GM10248 (cell line): ENCODE measurements at regions of chr14 and their contacts with region 1.

Region 1: DNA sequence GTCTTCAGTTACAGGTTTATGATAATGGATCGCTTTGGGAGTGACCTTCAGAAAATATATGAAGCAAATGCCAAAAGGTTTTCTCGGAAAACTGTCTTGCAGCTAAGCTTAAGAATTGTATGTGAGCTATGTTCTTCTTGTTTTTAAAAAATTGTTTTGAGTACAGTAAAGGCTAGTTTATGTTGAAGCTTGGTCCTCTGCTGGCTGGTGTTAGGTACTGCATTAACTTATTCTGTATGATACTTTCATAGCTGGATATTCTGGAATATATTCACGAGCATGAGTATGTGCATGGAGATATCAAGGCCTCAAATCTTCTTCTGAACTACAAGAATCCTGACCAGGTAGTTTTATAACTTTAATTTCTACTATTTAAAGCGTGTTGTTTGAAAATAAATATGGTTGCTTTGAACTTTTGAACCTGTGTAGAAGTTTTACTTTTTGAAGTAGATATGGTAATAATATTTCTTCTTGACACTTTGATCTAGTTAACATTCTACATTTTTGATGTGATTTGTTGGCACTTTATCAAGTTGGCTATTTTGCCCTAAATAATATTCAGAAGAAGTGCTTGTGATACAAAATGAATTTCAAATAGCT is 55.7 kb downstream of the VRK1 start:
- DNase-seq: peak; percentile 12
- CTCF ChIP-seq: peak; percentile 59

Region 2: GRCh38 chr14:96796851-96797581 is 55.9 kb before region 1 on chr14 and contains the start of gene VRK1:
- CTCF ChIA-PET with region 1: interaction called, 15 read pairs
- POLR2A ChIA-PET with region 1: no interaction called
- DNase-seq: peak; percentile 95
- CTCF ChIP-seq: no peak

Region 3: GRCh38 chr14:96802963-96803362 is 50.0 kb before region 1 on chr14:
- CTCF ChIA-PET with region 1: interaction called, 15 read pairs
- POLR2A ChIA-PET with region 1: no interaction called
- DNase-seq: no peak
- CTCF ChIP-seq: no peak

Region 4: GRCh38 chr14:96824283-96824682 is 28.6 kb before region 1 on chr14:
- CTCF ChIA-PET with region 1: interaction called, 19 read pairs
- POLR2A ChIA-PET with region 1: no interaction called
- DNase-seq: no peak
- CTCF ChIP-seq: no peak

Region 5: DNA sequence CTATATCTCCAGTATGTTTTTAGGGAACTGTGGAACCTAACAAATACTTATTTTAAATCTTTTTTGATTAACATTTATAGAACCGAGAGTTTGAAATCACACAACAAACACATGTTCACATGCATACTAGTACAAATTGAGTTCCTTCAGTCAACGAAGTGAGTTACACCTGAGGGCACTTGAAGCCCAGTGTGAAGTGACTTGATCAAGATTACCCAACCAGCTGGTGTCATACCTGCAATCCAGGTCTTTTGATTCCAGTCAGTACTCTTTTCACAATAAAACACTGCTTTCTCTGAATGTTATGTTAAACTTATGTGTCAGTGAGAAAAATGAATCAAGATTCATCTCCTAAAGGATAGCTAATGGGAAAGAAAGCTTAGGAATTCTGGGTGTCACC is 20.6 kb before region 1 on chr14:
- CTCF ChIA-PET with region 1: interaction called, 28 read pairs
- POLR2A ChIA-PET with region 1: no interaction called
- DNase-seq: no peak
- CTCF ChIP-seq: no peak

Region 6: GRCh38 chr14:96874127-96874526 is 21.2 kb after region 1 on chr14:
- CTCF ChIA-PET with region 1: interaction called, 29 read pairs
- POLR2A ChIA-PET with region 1: no interaction called
- DNase-seq: no peak
- CTCF ChIP-seq: no peak

Region 7: GRCh38 chr14:96894966-96895365 is 42.0 kb after region 1 on chr14:
- CTCF ChIA-PET with region 1: interaction called, 10 read pairs
- POLR2A ChIA-PET with region 1: no interaction called
- DNase-seq: no peak
- CTCF ChIP-seq: no peak